Vagina (tissue), 2 donors: ENCODE measurements at regions of chr2 and their contacts with region 1.

Region 1: DNA sequence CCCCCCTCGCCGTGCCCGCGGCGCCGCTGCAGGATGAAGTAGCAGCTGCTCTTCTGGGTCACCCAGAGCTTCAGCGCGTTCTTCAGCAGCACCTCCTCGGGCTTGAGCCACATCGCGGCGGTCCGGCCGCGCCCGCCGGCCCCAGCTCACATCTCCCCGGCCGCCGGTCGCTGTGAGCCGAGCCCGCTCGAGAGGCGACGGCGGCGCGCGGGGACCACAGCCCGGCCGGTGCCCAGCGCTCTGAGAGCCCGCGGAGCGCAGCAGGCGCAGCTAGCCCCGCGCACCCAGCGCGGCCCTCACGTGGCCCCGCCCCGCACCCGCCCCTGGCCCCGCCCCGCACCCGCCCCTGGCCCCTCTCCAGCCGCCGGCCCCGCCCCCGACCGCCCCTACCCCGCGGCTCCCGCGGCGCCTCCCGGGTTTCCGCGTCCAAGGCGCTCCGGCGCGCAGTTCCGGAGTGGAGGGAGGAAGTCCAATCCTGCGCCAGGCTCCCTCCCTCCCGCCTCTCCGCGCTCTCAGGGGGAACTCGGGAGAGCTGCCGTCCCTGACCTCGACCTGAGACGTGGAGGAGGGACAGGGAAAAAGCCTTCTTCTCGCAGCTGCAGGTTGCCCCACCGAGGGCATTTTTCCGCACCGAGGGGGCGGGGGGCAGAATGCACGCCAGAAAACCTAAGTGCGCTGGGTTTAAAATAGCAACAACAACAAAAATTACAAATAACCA is at the start of gene TBC1D8:
- DNase-seq: no peak
- H3K4me3 ChIP-seq: peak within 1 kb of the TSS; percentile 80 to 88
- H3K27ac ChIP-seq: peak within 1 kb of the TSS; percentile 87
- H3K4me1 ChIP-seq: peaks cover 40% of the 10 kb centered on the region
- H3K27me3 ChIP-seq: no peaks in the 10 kb centered on the region
- CTCF ChIP-seq: no peak
- POLR2A ChIP-seq: peak in 1 of 2 donors; percentile 77
- total RNA-seq, gene TBC1D8: 72.2 TPM

Region 2: DNA sequence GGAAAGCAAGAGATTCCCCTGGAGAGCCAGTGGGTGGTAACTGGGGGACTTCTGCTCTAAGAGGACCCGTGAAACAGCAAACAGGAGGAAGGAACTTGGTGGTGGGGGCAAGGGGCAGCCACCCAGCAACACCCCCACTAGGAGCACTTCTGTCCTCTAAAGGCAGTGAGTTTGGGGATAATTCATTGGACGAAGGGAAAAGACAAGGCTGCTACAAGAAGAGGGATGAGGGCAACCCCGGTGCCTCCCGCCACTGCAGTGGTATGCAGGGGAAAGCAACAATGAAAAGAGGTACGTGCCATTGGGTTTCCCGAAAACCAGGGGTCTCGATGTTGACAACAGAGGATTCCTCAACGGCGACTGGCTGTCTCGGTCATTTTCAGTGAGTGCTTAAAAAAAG is 140.1 kb before region 1 on chr2:
- intact Hi-C with region 1: loop called (anchors 2 kb)
- DNase-seq: peak in 1 of 2 donors; percentile 76
- H3K4me3 ChIP-seq: no peak overlapping the region
- H3K27ac ChIP-seq: no peak overlapping the region
- H3K4me1 ChIP-seq: no peaks in the 10 kb centered on the region
- H3K27me3 ChIP-seq: no peaks in the 10 kb centered on the region
- CTCF ChIP-seq: no peak
- POLR2A ChIP-seq: no peak